H1 (cell line): ENCODE measurements at regions of chr10 and their contacts with region 1.

Region 1: GRCh38 chr10:97534746-97535367 is 36.1 kb downstream of the UBTD1 start:
- DNase-seq: peak in 1 of 2 experiments; percentile 79
- H3K4me3 ChIP-seq: no peak overlapping the region
- H3K27ac ChIP-seq: no peak overlapping the region
- H3K4me1 ChIP-seq: peaks cover 0 to 15% (median 8%) of the 10 kb centered on the region in 4 experiments; a peak in 6 of 7 replicates
- H3K27me3 ChIP-seq: no peaks in the 10 kb centered on the region
- CTCF ChIP-seq: peak; percentile 78 to 85 (median 84)
- EP300 ChIP-seq: no peak
- POLR2A ChIP-seq: no peak
- RAD21 ChIP-seq: peak; percentile 67 to 76

Region 2: GRCh38 chr10:97336942-97337831 is 197.7 kb before region 1 on chr10:
- CTCF ChIA-PET with region 1: no interaction called
- POLR2A ChIA-PET with region 1: no interaction called
- DNase-seq: peak; percentile 72 to 89
- H3K4me3 ChIP-seq: peak overlapping the region; percentile 3 to 90 (median 22); a peak in 7 of 8 replicates
- H3K27ac ChIP-seq: no peak overlapping the region
- H3K4me1 ChIP-seq: peaks cover 5 to 12% (median 6%) of the 10 kb centered on the region in 4 experiments
- H3K27me3 ChIP-seq: no peaks in the 10 kb centered on the region
- CTCF ChIP-seq: no peak
- EP300 ChIP-seq: peak in 1 of 2 experiments; percentile 7; a peak in 1 of 3 replicates
- POLR2A ChIP-seq: peak in 1 of 2 experiments; percentile 34; a peak in 1 of 3 replicates
- RAD21 ChIP-seq: no peak; a peak in 1 of 4 replicates

Region 3: GRCh38 chr10:97483506-97483905 is 51.4 kb before region 1 on chr10:
- CTCF ChIA-PET with region 1: interaction called, 18 read pairs
- POLR2A ChIA-PET with region 1: interaction called, 4 read pairs
- DNase-seq: no peak
- H3K4me3 ChIP-seq: no peak overlapping the region
- H3K27ac ChIP-seq: no peak overlapping the region
- H3K4me1 ChIP-seq: peaks cover 8 to 16% (median 11%) of the 10 kb centered on the region in 4 experiments; a peak in 6 of 7 replicates
- H3K27me3 ChIP-seq: no peaks in the 10 kb centered on the region
- CTCF ChIP-seq: no peak
- EP300 ChIP-seq: no peak
- POLR2A ChIP-seq: no peak
- RAD21 ChIP-seq: no peak

Region 4: GRCh38 chr10:97566339-97566996 is 31.6 kb after region 1 on chr10:
- CTCF ChIA-PET with region 1: interaction called, 33 read pairs
- POLR2A ChIA-PET with region 1: no interaction called
- DNase-seq: no peak
- H3K4me3 ChIP-seq: no peak overlapping the region
- H3K27ac ChIP-seq: no peak overlapping the region
- H3K4me1 ChIP-seq: no peaks in the 10 kb centered on the region; a peak in 1 of 7 replicates
- H3K27me3 ChIP-seq: no peaks in the 10 kb centered on the region
- CTCF ChIP-seq: no peak
- EP300 ChIP-seq: no peak
- POLR2A ChIP-seq: no peak
- RAD21 ChIP-seq: no peak

Region 5: GRCh38 chr10:97584060-97584797 is 49.4 kb after region 1 on chr10 and contains the start of gene HOGA1:
- CTCF ChIA-PET with region 1: interaction called, 10 read pairs
- POLR2A ChIA-PET with region 1: no interaction called
- DNase-seq: peak in 1 of 2 experiments; percentile 65
- H3K4me3 ChIP-seq: no peak within 1 kb of the TSS
- H3K27ac ChIP-seq: no peak within 1 kb of the TSS
- H3K4me1 ChIP-seq: peaks cover 0 to 6% (median 2%) of the 10 kb centered on the region in 4 experiments; a peak in 2 of 7 replicates
- H3K27me3 ChIP-seq: no peaks in the 10 kb centered on the region
- CTCF ChIP-seq: no peak
- EP300 ChIP-seq: no peak
- POLR2A ChIP-seq: no peak
- RAD21 ChIP-seq: no peak
- total RNA-seq, gene HOGA1: 0.28 and 0.29 TPM in 2 replicates